H1 (cell line): ENCODE measurements at regions of chr9 and their contacts with region 1.

Region 1: GRCh38 chr9:131046581-131047202 is 37.7 kb downstream of the LAMC3 start:
- DNase-seq: peak; percentile 46 to 93
- H3K4me3 ChIP-seq: no peak overlapping the region
- H3K27ac ChIP-seq: no peak overlapping the region
- H3K4me1 ChIP-seq: no peaks in the 10 kb centered on the region
- H3K27me3 ChIP-seq: no peaks in the 10 kb centered on the region
- CTCF ChIP-seq: peak; percentile 81 to 94 (median 86)
- EP300 ChIP-seq: no peak
- POLR2A ChIP-seq: no peak
- RAD21 ChIP-seq: peak; percentile 90 to 95

Region 2: DNA sequence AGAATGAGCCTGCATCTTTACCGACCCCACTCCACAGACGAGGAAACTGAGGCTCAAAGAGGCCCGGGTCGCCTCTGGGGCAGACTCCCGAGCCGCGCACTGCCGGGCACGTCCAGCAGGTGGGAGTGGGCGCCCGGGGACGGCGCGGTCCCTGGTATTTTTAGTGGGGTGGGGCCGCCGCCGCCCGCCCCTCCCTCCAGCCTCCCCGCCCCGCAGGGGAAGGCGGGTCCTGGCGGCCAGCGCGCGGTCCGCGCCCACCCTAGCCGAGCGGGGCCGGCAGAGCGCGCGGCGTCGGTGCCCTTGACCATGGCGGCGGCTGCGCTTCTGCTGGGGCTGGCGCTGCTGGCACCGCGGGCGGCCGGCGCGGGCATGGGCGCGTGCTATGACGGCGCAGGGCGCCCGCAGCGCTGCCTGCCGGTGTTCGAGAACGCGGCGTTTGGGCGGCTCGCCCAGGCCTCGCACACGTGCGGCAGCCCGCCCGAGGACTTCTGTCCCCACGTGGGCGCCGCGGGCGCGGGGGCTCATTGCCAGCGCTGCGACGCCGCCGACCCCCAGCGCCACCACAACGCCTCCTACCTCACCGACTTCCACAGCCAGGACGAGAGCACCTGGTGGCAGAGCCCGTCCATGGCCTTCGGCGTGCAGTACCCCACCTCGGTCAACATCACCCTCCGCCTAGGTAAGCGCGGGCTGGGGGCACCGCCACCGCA is 37.6 kb before region 1 on chr9 and contains the start of gene LAMC3:
- CTCF ChIA-PET with region 1: interaction called, 156 read pairs
- POLR2A ChIA-PET with region 1: interaction called, 3 read pairs
- DNase-seq: peak in 1 of 2 experiments; percentile 80
- H3K4me3 ChIP-seq: peak within 1 kb of the TSS; percentile 31 to 57 (median 40)
- H3K27ac ChIP-seq: no peak within 1 kb of the TSS
- H3K4me1 ChIP-seq: peaks cover 2 to 22% (median 8%) of the 10 kb centered on the region in 4 experiments
- H3K27me3 ChIP-seq: peaks cover 0 to 10% (median 7%) of the 10 kb centered on the region in 4 experiments; a peak in 5 of 7 replicates
- CTCF ChIP-seq: peak; percentile 49 to 72 (median 69)
- EP300 ChIP-seq: no peak
- POLR2A ChIP-seq: no peak; a peak in 1 of 3 replicates
- RAD21 ChIP-seq: peak; percentile 56 to 68
- total RNA-seq, gene LAMC3: 12.3 and 13.2 TPM in 2 replicates

Region 3: DNA sequence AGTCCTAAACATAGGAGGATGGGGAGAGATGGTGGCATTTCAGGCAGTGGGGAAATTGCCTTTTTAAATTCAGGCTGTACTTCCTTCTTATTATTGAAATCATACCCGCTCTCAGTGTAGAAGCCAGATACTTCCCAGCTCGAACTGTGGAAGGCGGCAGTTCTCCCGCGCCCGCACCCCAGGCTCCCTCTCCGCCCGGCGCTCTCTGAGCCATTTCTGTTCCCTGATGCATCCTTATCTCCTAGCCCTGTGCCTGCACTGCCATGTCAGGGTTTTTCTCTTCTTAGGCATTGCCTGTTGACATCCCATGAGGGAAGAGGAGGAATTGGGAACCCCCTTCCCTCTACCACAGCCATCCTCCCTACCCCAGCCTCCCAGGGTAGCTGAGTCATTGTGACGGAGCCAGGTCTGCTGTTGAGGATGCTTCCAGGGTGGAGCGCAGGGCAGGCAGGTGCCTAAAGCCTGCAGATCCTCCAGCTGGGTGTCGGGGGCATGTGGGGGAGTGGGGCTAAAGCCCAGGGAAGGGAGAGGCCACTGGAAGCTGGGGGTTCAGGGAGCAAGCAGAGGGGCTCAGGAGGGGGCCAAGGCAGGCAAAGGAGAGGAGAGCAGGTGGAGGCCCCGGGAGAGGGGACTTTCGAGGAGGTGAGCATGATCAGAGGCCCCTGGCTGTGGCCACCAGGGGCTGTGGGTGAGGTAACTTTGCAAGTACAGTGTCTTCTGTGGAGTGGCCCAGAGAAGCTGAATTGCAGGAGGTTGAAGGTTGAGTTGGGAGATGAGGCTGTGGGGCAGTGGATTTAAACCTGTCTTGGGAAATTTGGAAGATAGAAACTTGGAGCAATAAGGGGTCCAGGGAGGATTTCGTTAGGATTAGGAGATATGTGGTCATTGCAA is 21.5 kb before region 1 on chr9:
- CTCF ChIA-PET with region 1: interaction called, 156 read pairs
- POLR2A ChIA-PET with region 1: no interaction called
- DNase-seq: no peak
- H3K4me3 ChIP-seq: no peak overlapping the region
- H3K27ac ChIP-seq: no peak overlapping the region; the same call in 1 of the 2 replicates
- H3K4me1 ChIP-seq: peaks cover 0 to 2% (median 0%) of the 10 kb centered on the region in 4 experiments; a peak in 2 of 7 replicates
- H3K27me3 ChIP-seq: no peaks in the 10 kb centered on the region
- CTCF ChIP-seq: no peak
- EP300 ChIP-seq: no peak
- POLR2A ChIP-seq: no peak
- RAD21 ChIP-seq: no peak

Region 4: DNA sequence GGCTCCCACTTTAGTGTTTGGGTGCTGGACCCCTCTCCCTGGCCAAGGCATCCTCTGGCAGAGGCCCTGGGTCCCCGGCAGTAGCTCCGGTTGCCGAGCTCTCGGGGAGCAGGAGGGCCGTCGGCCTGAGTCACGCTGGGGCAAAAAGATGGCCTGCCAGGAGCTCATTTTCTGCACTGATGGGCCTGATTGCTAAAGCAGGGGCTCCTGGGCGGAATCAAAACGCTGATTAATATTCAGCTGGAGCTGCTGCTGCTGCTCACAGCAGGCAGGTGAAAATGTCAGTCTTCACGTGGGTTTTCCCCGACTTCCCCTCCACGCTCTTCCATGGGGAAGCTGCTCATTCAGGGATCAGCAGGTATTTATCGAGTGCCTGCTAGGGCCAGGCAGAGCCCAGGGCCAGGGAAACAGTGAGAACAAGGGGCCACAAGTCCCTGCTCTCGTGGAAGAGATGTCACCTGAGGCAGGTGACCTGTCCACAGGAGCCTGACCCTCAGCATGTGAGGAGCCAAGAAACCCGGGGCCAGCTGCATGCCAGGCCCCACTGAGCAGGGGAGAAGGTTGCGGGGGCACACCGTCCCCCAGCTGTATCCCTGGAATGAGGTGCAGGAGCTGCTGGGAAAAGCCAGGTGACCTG is 15.6 kb before region 1 on chr9:
- CTCF ChIA-PET with region 1: interaction called, 52 read pairs
- POLR2A ChIA-PET with region 1: no interaction called
- DNase-seq: no peak
- H3K4me3 ChIP-seq: no peak overlapping the region
- H3K27ac ChIP-seq: no peak overlapping the region
- H3K4me1 ChIP-seq: no peaks in the 10 kb centered on the region
- H3K27me3 ChIP-seq: no peaks in the 10 kb centered on the region
- CTCF ChIP-seq: no peak
- EP300 ChIP-seq: no peak
- POLR2A ChIP-seq: no peak
- RAD21 ChIP-seq: no peak

Region 5: GRCh38 chr9:131197160-131197911 is 150.6 kb after region 1 on chr9:
- CTCF ChIA-PET with region 1: no interaction called
- POLR2A ChIA-PET with region 1: no interaction called
- DNase-seq: no peak
- H3K4me3 ChIP-seq: no peak overlapping the region
- H3K27ac ChIP-seq: no peak overlapping the region
- H3K4me1 ChIP-seq: no peaks in the 10 kb centered on the region
- H3K27me3 ChIP-seq: no peaks in the 10 kb centered on the region
- CTCF ChIP-seq: no peak
- EP300 ChIP-seq: no peak
- POLR2A ChIP-seq: no peak
- RAD21 ChIP-seq: no peak